Activated T-helper 1 cell treated with anti-CD3 and anti-CD28 coated beads, Interleukin-12 subunit alpha, Interleukin-12 subunit beta, Interleukin-2, Interleukin-4 antibody, amounts not matched to agents 30 ng/mL and 10 ng/mL and 1 ng/mL, durations not matched to agents 14 hours and 24 hours and 36 hours (primary cell): ENCODE measurements at regions of chr18 and their contacts with region 1.

Region 1: GRCh38 chr18:77101410-77102258 is 30.9 kb downstream of the MBP start:
- DNase-seq: peak; percentile 31
- H3K4me3 Mint-ChIP-seq: peak overlapping the region; percentile 83
- H3K27ac Mint-ChIP-seq: peak overlapping the region; percentile 95
- H3K4me1 Mint-ChIP-seq: peaks cover 96% of the 10 kb centered on the region
- H3K27me3 Mint-ChIP-seq: no peaks in the 10 kb centered on the region

Region 2: GRCh38 chr18:76374330-76375281 is 727.0 kb before region 1 on chr18:
- intact Hi-C with region 1: loop called (anchors 1 kb)
- DNase-seq: peak; percentile 50
- H3K4me3 Mint-ChIP-seq: peak overlapping the region; percentile 8
- H3K27ac Mint-ChIP-seq: peak overlapping the region; percentile 70
- H3K4me1 Mint-ChIP-seq: peaks cover 40% of the 10 kb centered on the region
- H3K27me3 Mint-ChIP-seq: peaks cover 12% of the 10 kb centered on the region

Region 3: DNA sequence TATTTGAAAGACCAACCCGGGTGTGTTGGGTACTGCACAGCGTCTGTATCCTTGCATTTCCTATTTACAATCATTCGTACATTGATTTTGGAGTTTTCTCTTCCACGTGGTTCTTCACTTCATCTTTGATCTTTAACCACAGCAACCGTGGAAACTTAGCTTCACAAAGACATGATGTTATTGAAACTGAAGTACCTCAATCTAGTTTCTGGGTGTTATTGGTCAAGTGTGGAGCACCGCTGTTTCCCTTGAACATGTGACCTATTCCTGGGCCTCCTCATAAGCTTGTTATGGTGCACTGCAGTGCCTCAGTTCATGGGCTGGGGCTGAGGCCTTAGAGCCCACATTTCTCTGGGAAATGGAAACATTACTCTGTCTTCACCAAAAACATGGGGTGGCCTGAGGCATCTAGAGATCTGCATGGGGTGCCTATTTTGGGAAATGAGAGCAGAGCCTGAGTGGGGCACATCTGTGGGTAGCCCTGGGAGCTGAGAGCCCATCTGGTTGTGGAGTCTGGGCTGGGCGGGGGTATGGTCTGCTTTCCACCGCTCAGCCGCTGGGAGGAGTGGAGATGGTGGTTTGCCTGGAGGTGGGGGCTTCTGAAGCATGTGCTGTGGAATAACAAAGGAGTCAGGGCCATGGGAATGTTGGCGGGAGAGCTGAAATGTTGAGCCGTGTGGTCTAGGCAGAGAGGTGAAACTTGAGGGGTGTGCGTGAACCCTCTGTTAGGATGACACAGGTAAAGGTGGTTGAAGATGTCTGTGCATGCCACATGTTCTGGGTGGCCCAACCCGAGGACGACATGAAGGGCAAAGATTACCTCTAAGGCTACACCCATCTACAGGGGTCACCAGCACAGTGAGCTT is 241.9 kb before region 1 on chr18:
- intact Hi-C with region 1: loop called (anchors 1 kb)
- DNase-seq: peak; percentile 35
- H3K4me3 Mint-ChIP-seq: peak overlapping the region; percentile 51
- H3K27ac Mint-ChIP-seq: peak overlapping the region; percentile 89
- H3K4me1 Mint-ChIP-seq: peaks cover 27% of the 10 kb centered on the region
- H3K27me3 Mint-ChIP-seq: no peaks in the 10 kb centered on the region

Region 4: GRCh38 chr18:77054606-77055428 is 46.8 kb before region 1 on chr18:
- intact Hi-C with region 1: loop called (anchors 1 kb)
- DNase-seq: peak; percentile 78
- H3K4me3 Mint-ChIP-seq: peak overlapping the region; percentile 72
- H3K27ac Mint-ChIP-seq: peak overlapping the region; percentile 95
- H3K4me1 Mint-ChIP-seq: peaks cover 66% of the 10 kb centered on the region
- H3K27me3 Mint-ChIP-seq: no peaks in the 10 kb centered on the region

Region 5: DNA sequence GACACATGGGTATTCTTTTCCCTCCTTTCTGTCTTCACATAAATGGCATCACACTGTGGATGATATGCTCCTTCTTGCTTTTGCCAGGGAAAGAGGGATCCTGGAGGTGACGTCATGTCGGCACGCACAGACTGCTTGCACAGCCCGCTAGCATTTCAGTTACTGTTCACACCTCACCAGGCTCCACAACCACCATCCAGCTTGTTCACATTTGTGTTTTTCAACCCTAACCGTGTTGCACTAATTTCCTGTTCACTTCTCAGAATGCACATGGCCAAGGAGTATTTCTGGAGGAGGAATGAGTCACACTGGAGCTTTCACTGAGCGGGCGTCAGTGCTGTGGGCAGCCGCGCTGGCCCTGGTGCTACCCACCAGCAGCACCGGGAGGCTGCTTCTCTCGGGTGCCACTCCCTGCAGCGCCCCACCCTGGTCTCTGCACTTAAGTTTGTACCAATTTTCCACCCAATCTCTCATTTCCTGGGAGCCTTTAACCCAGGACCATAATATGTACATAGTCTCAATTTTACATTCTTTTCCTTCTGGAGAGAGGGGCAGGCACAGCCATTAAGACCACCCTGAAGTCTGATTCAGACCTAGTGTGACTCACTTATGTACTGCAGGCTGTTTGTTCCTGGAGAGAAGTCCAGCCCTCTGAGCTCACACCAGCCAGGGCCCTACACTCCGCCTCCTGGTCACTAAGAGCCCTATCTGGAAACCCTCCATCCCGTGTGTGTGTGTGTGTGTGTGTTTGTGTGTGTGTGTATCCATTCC is 34.2 kb before region 1 on chr18:
- intact Hi-C with region 1: loop called (anchors 1 kb)
- DNase-seq: peak; percentile 75
- H3K4me3 Mint-ChIP-seq: peak overlapping the region; percentile 76
- H3K27ac Mint-ChIP-seq: peak overlapping the region; percentile 96
- H3K4me1 Mint-ChIP-seq: peaks cover 100% of the 10 kb centered on the region
- H3K27me3 Mint-ChIP-seq: no peaks in the 10 kb centered on the region

Region 6: GRCh38 chr18:77132371-77133050 is 30.9 kb after region 1 on chr18 and contains the start of gene MBP:
- intact Hi-C with region 1: loop called (anchors 1 kb)
- DNase-seq: peak; percentile 65
- H3K4me3 Mint-ChIP-seq: peak within 1 kb of the TSS; percentile 100
- H3K27ac Mint-ChIP-seq: peak within 1 kb of the TSS; percentile 48
- H3K4me1 Mint-ChIP-seq: peaks cover 54% of the 10 kb centered on the region
- H3K27me3 Mint-ChIP-seq: no peaks in the 10 kb centered on the region
- total RNA-seq, gene MBP: 57.3 and 63.6 TPM in 2 replicates

Region 7: GRCh38 chr18:77223653-77224052 is 122.0 kb after region 1 on chr18:
- intact Hi-C with region 1: loop called (anchors 1 kb)
- DNase-seq: no peak
- H3K4me3 Mint-ChIP-seq: no peak overlapping the region
- H3K27ac Mint-ChIP-seq: no peak overlapping the region
- H3K4me1 Mint-ChIP-seq: peaks cover 12% of the 10 kb centered on the region
- H3K27me3 Mint-ChIP-seq: peaks cover 11% of the 10 kb centered on the region